Activated CD4-positive, alpha-beta memory T cell treated with anti-CD3 and anti-CD28 coated beads, Interleukin-2, amount 10 ng/mL, durations not matched to agents 7 days and 5 days (primary cell): ENCODE measurements at regions of chr1 and their contacts with region 1.

Region 1: GRCh38 chr1:41416552-41417334 is 55.5 kb downstream of the FOXO6 start:
- DNase-seq: peak; percentile 61
- H3K4me3 Mint-ChIP-seq: no peak overlapping the region
- H3K27ac Mint-ChIP-seq: no peak overlapping the region
- H3K4me1 Mint-ChIP-seq: no peaks in the 10 kb centered on the region
- H3K27me3 Mint-ChIP-seq: no peaks in the 10 kb centered on the region

Region 2: GRCh38 chr1:41282679-41283317 is 133.9 kb before region 1 on chr1:
- CTCF ChIA-PET with region 1: interaction called, 10 read pairs
- POLR2A ChIA-PET with region 1: no interaction called
- DNase-seq: peak; percentile 34
- H3K4me3 Mint-ChIP-seq: no peak overlapping the region
- H3K27ac Mint-ChIP-seq: no peak overlapping the region
- H3K4me1 Mint-ChIP-seq: no peaks in the 10 kb centered on the region
- H3K27me3 Mint-ChIP-seq: peaks cover 31% of the 10 kb centered on the region

Region 3: GRCh38 chr1:41322835-41323627 is 93.7 kb before region 1 on chr1:
- CTCF ChIA-PET with region 1: interaction called, 15 read pairs
- POLR2A ChIA-PET with region 1: no interaction called
- DNase-seq: peak; percentile 38
- H3K4me3 Mint-ChIP-seq: no peak overlapping the region
- H3K27ac Mint-ChIP-seq: no peak overlapping the region
- H3K4me1 Mint-ChIP-seq: no peaks in the 10 kb centered on the region
- H3K27me3 Mint-ChIP-seq: peaks cover 3% of the 10 kb centered on the region

Region 4: DNA sequence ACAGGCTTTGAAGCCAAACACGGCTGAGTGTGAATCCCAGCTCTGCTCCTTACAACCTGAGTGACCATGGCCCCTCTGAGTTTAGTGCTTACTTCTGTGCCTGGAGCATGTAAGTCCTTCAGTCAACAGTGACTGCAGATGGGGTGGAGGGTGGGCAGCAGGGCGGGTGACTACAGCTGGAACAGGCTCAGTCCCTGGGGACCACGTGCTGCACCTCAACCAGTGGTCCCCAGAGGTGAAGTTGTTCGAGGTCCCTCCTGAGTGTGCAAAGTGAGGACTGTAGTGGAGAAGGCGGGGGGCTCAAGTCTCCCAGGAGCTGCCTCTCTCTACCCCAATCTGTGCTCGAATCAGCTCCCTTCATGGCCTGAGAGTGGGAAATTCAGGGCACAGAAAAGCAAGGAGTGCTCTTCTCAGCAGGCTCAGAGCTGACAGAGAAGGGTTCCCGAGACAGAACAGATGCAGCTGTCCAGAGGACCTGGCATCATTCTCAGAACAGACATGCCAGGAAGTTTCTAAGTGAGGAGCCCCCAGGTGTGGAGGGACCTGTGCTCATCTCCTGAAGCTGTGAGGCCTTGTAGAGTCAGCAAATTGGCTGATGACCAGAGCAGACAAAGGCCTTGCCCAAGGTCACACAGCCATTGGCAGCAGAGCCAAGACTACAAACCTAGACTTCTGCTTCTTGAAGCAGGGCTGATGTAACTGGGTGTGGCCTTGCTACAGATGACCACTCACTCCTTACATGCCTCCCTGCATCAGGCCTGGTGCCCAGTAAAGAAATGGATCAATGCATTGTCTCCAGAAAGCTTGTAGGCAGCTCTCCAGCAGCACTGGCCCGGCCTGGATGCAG is 129.5 kb after region 1 on chr1:
- CTCF ChIA-PET with region 1: no interaction called
- POLR2A ChIA-PET with region 1: no interaction called
- DNase-seq: no peak
- H3K4me3 Mint-ChIP-seq: no peak overlapping the region
- H3K27ac Mint-ChIP-seq: no peak overlapping the region
- H3K4me1 Mint-ChIP-seq: peaks cover 5% of the 10 kb centered on the region
- H3K27me3 Mint-ChIP-seq: no peaks in the 10 kb centered on the region